Activated CD4-positive, alpha-beta T cell treated with anti-CD3 and anti-CD28 coated beads, Interleukin-2, amount 10 ng/mL, durations not matched to agents 24 days and 14 days (primary cell): ENCODE measurements at regions of chr3 and their contacts with region 1.

Region 1: DNA sequence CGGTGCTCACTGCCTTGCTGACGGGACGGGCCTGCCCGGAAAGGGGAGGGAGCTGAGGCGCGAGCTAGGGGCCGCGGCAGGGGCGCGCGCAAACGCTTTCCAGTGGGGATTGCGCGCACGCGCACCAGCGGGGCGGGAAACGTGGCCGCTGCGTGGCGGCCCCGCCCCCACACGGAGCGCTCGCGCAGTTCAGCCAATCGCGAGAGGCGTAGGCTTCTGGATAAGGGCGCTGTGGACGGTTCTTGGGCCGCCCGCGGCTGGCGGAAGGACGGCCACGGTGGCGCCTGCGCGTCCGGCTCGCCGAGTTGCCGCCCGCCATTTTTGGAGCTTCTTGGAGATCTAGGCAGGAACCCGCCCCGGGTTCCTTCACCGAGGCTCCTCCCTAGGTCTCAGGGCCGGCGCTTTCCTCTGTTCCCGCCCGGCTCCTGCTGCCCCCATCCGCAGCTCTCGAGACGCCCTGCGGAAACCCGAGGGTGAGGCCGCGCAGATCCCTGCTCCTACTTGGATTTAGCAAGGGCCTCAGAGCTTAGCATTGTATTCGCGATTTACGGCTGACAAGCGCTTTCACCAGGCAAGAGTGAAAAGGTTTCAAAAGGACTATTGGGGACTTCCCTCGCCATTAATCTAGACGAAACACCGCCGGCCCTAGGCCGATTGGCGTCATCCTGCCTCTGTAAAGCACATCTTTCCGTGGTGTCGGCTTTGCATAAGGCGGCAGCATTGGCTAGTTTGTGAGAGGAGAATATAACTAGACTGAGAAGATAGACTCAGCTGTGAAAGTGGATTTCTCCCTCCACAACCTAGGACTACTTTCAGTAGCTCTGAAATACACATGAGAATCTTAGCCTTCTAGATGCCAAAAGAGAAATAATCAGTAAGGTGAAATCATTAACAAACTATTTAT is 496 bp upstream of the STAG1 start:
- DNase-seq: peak; percentile 100
- H3K4me3 Mint-ChIP-seq: peak overlapping the region; percentile 81
- H3K27ac Mint-ChIP-seq: peak overlapping the region; percentile 95
- H3K4me1 Mint-ChIP-seq: peaks cover 34% of the 10 kb centered on the region
- H3K27me3 Mint-ChIP-seq: no peaks in the 10 kb centered on the region

Region 2: GRCh38 chr3:136250226-136250902 is 502.3 kb before region 1 on chr3 and contains the start of gene PCCB:
- intact Hi-C with region 1: loop called (anchors 1 kb)
- DNase-seq: peak; percentile 97
- H3K4me3 Mint-ChIP-seq: peak within 1 kb of the TSS; percentile 91
- H3K27ac Mint-ChIP-seq: peak within 1 kb of the TSS; percentile 95
- H3K4me1 Mint-ChIP-seq: peaks cover 16% of the 10 kb centered on the region
- H3K27me3 Mint-ChIP-seq: no peaks in the 10 kb centered on the region
- total RNA-seq, gene PCCB: 45.4 and 55.9 TPM in 2 replicates

Region 3: DNA sequence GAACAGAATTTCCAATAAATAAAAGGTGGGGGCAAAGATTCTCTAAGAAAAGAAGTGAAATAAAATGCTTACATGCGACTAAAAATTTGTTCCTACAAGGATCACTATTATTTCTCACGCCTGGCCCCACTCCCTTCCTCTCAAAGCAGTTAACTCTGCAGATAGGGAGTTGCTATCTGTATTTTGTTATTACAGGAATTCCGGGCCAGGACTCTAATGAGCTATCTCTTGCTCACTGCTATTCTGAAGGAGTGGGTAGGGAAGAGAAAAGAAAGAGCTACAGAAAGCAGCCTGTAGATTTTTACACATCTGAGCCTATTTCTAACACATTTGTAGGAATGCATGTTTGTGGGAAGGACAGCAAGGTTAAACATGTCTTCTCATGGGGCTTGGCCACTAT is 362.1 kb before region 1 on chr3:
- intact Hi-C with region 1: loop called (anchors 1 kb)
- DNase-seq: no peak
- H3K4me3 Mint-ChIP-seq: no peak overlapping the region
- H3K27ac Mint-ChIP-seq: no peak overlapping the region
- H3K4me1 Mint-ChIP-seq: no peaks in the 10 kb centered on the region
- H3K27me3 Mint-ChIP-seq: no peaks in the 10 kb centered on the region

Region 4: DNA sequence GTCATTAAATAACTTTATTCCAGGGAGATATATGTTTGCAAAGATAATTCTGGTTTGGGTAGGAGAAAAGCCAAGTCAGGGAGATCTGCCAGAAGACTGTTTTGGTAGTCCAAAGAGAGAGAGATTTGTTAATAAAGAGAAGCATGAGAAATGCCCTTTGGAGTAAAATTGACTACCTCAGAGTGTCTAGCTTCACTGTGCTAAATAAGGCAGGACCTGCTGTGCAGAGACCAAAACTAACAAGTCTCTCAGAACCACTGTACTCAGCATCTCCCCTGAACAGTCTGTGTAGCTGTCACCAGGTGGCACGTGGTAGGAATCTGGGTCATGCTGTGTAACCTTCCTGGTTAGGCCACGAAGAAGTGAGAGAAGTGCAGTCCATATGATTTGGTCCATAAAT is 34.7 kb after region 1 on chr3:
- intact Hi-C with region 1: loop called (anchors 2 kb)
- DNase-seq: peak; percentile 73
- H3K4me3 Mint-ChIP-seq: peak overlapping the region; percentile 33
- H3K27ac Mint-ChIP-seq: peak overlapping the region; percentile 63
- H3K4me1 Mint-ChIP-seq: peaks cover 13% of the 10 kb centered on the region
- H3K27me3 Mint-ChIP-seq: peaks cover 7% of the 10 kb centered on the region

Region 5: DNA sequence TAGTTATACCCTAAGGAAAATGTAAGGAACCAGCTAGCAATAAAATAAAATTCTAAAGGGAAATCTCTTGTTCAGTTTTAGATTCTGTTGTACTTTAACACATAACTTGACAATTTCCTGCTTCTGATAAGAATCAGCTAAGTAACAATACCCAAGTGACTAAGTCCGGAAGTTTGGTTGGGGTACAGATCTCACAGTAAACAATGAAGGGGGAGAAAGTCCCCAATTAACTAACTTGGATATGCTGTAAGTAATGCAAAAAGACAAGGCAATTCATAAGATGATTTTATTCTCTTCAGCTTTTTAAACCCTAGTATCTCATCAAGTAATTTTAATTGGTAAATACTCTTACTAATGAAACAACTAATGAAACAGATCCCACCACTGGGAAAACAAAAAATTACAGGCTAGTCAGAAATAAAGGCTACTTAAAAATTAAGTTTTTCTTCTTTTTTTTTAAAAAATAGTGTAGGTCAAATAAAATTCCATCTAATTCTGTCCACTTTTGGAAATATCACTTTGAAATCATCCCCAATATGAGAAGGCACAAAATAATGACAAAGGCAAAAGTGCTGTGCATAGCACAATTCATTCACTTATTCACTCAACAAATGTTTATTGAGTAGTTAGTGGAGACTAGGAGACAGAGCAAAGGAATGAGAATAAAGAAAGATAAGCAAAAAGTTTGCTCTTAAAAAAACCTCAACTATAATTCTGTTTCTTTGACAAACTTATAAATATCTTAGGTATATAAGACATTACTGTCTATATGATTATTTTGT is 167.3 kb after region 1 on chr3:
- intact Hi-C with region 1: loop called (anchors 5 kb)
- DNase-seq: peak; percentile 81
- H3K4me3 Mint-ChIP-seq: peak overlapping the region; percentile 51
- H3K27ac Mint-ChIP-seq: peak overlapping the region; percentile 53
- H3K4me1 Mint-ChIP-seq: peaks cover 42% of the 10 kb centered on the region
- H3K27me3 Mint-ChIP-seq: no peaks in the 10 kb centered on the region